Dendritic cell treated with granulocyte-macrophage colony-stimulating factor and Interleukin-4, amounts not matched to agents 40 ng/mL and 50 ng/mL, for 4 days (primary cell): ENCODE measurements at regions of chr1 and their contacts with region 1.

Region 1: GRCh38 chr1:154974063-154974807 is at the start of gene CKS1B:
- H3K4me3 Mint-ChIP-seq: no peak within 1 kb of the TSS
- H3K27ac Mint-ChIP-seq: no peak within 1 kb of the TSS
- H3K4me1 Mint-ChIP-seq: no peaks in the 10 kb centered on the region
- H3K27me3 Mint-ChIP-seq: no peaks in the 10 kb centered on the region

Region 2: GRCh38 chr1:154936555-154937084 is 37.6 kb before region 1 on chr1 and contains the start of gene PMVK:
- intact Hi-C with region 1: loop called (anchors 1 kb)
- H3K4me3 Mint-ChIP-seq: peak within 1 kb of the TSS; percentile 79
- H3K27ac Mint-ChIP-seq: peak within 1 kb of the TSS; percentile 88
- H3K4me1 Mint-ChIP-seq: peaks cover 54% of the 10 kb centered on the region
- H3K27me3 Mint-ChIP-seq: no peaks in the 10 kb centered on the region

Region 3: DNA sequence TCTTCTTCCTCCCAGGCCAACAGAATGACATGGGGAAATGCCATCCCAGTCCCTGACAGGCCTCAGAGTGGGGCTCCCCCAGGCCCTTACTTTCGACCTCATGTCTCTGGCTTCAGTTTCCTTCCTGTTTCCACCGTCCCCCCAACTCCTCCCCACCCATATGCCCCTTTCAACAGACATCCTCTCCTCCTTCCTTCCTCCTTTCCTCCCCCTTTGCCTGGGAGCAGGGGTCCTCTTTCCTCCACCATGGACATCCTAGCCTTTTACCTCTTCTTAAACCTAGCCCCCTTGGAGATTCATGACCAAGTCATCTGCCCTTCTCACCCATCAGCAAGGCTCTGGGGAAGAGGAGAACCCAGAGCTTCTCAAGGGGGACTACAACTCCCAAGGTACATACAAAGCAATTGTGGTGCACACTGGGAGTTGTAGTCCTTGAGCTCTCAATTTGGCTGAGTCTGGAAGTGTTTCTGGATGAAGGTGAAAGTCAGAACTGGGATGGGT is 32.4 kb after region 1 on chr1:
- intact Hi-C with region 1: loop called (anchors 5 kb)
- H3K4me3 Mint-ChIP-seq: peak overlapping the region; percentile 61
- H3K27ac Mint-ChIP-seq: peak overlapping the region; percentile 100
- H3K4me1 Mint-ChIP-seq: peaks cover 78% of the 10 kb centered on the region
- H3K27me3 Mint-ChIP-seq: no peaks in the 10 kb centered on the region

Region 4: GRCh38 chr1:155193275-155193990 is 219.2 kb after region 1 on chr1:
- intact Hi-C with region 1: no loop called
- H3K4me3 Mint-ChIP-seq: peak overlapping the region; percentile 75
- H3K27ac Mint-ChIP-seq: peak overlapping the region; percentile 93
- H3K4me1 Mint-ChIP-seq: peaks cover 41% of the 10 kb centered on the region
- H3K27me3 Mint-ChIP-seq: peaks cover 19% of the 10 kb centered on the region

Region 5: GRCh38 chr1:155884031-155884960 is 910.1 kb after region 1 on chr1:
- intact Hi-C with region 1: no loop called
- H3K4me3 Mint-ChIP-seq: no peak overlapping the region
- H3K27ac Mint-ChIP-seq: no peak overlapping the region
- H3K4me1 Mint-ChIP-seq: no peaks in the 10 kb centered on the region
- H3K27me3 Mint-ChIP-seq: no peaks in the 10 kb centered on the region